ENCODE measurements at regions of chr16 and their contacts with region 1.

Region 1: DNA sequence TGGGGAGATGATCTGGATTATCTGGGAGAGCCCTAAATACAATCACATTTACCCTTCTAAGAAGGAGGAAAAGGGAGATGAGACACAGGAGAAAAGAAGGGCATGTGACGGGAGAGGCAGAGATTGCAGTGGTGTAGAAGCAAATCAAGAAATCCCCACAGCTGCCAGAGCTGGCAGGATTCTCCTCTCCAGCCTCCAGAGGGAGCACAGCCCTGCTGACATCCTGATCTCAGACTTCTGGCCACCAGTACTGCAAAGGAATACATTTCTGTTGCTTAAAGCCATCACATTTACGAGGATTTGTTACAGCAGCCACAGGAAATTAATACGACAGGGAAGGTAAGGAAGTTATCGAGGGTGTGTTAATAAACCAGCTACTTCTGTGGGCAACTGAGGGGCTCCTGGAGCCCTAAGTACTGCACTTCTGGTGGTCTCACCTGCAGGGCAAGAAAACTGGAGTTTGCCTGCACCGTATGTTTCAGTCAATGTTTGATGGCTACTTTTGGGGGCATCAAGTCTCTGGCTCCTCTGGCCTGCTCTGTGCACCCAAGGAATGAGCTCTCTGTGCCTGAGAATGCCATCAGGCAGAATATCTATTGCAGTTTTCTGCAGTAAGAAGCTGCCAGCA is 22.9 kb upstream of the CDH13 start:
- DNase-seq: peak; percentile 58
- ATAC-seq: peak; percentile 92

Region 2: GRCh38 chr16:83356266-83356665 is 752.4 kb after region 1 on chr16:
- intact Hi-C with region 1: loop called (anchors 10 kb)
- DNase-seq: no peak
- ATAC-seq: peak; percentile 67

Measured in left ventricle myocardium superior (tissue), 1 donor.